ENCODE measurements at regions of chr7 and their contacts with region 1.

Region 1: DNA sequence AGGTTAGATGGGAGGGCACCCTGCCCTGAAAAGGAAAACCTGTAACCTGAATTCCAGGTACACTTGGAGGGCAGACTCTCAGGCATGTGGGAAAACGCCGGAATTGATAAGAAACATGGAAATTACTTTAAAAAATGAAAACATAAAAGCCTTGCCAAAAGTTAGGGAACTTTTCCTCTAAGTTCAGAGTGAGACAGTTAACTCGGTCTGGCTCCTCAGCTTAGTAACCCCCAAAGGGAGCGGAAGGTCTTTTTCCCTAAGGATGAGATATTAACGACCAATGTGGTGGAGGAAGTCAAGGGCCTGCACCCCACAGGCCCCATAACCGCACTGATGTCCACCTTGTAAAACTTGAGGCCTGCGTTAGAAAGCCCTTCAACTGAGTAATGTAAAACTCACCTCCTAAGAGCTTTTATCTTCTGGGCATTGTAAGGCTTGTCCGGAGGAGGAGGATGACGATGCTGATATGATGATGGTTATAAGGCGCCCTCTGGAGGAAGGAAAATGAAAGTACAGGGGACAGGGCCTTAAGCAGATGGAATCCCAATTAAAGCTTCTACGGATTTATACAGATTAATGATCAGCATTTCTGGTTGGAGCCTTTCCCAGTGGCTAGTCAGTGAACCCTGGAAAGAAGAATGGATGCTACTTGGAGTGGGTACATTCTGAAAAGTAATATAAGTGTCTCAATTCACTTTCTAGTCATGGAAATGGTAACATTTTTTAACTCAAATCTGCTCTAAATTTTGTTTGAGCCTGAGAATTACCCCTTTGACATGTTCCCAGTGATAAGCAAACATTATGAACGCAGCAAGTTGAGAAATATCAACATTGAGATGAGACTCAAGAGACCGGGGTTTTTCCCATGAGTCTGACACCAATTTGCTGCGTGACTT is 694 bp downstream of the COL1A2 start:
- DNase-seq: peak; percentile 80
- H3K27ac ChIP-seq: no peak overlapping the region
- CTCF ChIP-seq: peak; percentile 79

Region 2: DNA sequence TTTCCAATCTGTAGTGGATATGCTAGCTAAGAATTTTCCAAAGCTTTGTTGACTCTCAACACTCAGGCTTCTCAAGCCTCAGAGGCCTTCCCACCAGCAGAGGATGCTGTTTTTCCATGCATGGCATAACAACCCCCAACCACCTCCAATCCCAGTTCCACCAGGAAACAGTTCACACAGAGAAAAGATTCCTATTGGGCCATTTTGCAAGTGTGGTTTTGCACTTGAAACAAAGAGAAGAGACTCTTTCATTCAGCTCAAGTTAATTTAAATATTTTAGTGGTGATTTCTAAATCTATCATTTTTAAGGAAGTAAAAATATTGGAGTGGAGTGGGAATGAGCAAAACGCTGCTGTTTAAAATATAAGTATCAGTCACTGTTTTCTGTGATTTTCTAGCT is 106.3 kb before region 1 on chr7:
- CTCF ChIA-PET with region 1: interaction called, 80 read pairs
- POLR2A ChIA-PET with region 1: no interaction called
- DNase-seq: peak; percentile 75
- H3K27ac ChIP-seq: no peak overlapping the region
- CTCF ChIP-seq: peak; percentile 94

Region 3: GRCh38 chr7:94295850-94296249 is 99.5 kb before region 1 on chr7:
- CTCF ChIA-PET with region 1: interaction called, 80 read pairs
- POLR2A ChIA-PET with region 1: no interaction called
- DNase-seq: no peak
- H3K27ac ChIP-seq: no peak overlapping the region
- CTCF ChIP-seq: no peak; the same call in 1 of the 2 replicates

Region 4: GRCh38 chr7:94301024-94301586 is 94.3 kb before region 1 on chr7:
- CTCF ChIA-PET with region 1: interaction called, 21 read pairs
- POLR2A ChIA-PET with region 1: no interaction called
- DNase-seq: peak; percentile 96
- H3K27ac ChIP-seq: peak overlapping the region; percentile 73
- CTCF ChIP-seq: no peak